Caco-2 (cell line): ENCODE measurements at regions of chr3 and their contacts with region 1.

Region 1: DNA sequence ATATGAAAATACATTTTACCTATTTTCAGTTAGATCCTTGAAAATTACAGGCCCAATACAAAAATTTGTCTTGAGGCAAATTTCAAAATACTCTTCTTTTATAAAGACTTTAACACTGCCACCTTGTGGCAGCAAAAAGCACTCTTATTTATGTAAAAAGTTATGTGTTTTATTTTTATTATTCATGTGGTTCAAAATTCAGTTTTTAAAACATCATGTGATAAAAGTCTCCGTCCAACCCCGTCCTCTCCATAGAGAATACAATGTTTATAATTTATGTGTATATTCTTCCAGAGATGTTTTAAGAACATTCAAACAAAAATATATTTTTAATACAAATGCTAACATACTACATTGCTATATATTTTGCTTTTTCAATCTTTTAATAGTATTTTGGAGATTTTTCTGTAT is 36.9 kb upstream of the TRIM59 start:
- DNase-seq: no peak
- H3K4me3 ChIP-seq: no peak overlapping the region
- H3K4me3 Mint-ChIP-seq: no peak overlapping the region
- H3K27ac Mint-ChIP-seq: no peak overlapping the region
- H3K4me1 ChIP-seq: no peaks in the 10 kb centered on the region
- H3K4me1 Mint-ChIP-seq: no peaks in the 10 kb centered on the region
- H3K27me3 ChIP-seq: no peaks in the 10 kb centered on the region
- H3K27me3 Mint-ChIP-seq: no peaks in the 10 kb centered on the region
- CTCF ChIP-seq: peak; percentile 50 to 62

Region 2: GRCh38 chr3:159988617-159989271 is 497.7 kb before region 1 on chr3 and contains the start of gene IL12A:
- CTCF ChIA-PET with region 1: no interaction called
- POLR2A ChIA-PET with region 1: no interaction called
- intact Hi-C with region 1: loop called (anchors 5 kb)
- DNase-seq: peak; percentile 80 to 86
- H3K4me3 ChIP-seq: peak within 1 kb of the TSS; percentile 55
- H3K4me3 Mint-ChIP-seq: peak within 1 kb of the TSS; percentile 83
- H3K27ac Mint-ChIP-seq: no peak within 1 kb of the TSS
- H3K4me1 ChIP-seq: peaks cover 11% of the 10 kb centered on the region
- H3K4me1 Mint-ChIP-seq: peaks cover 18% of the 10 kb centered on the region
- H3K27me3 ChIP-seq: no peaks in the 10 kb centered on the region
- H3K27me3 Mint-ChIP-seq: no peaks in the 10 kb centered on the region
- CTCF ChIP-seq: peak; percentile 91
- total RNA-seq, gene IL12A: 0.60 and 0.95 TPM in 2 replicates

Region 3: DNA sequence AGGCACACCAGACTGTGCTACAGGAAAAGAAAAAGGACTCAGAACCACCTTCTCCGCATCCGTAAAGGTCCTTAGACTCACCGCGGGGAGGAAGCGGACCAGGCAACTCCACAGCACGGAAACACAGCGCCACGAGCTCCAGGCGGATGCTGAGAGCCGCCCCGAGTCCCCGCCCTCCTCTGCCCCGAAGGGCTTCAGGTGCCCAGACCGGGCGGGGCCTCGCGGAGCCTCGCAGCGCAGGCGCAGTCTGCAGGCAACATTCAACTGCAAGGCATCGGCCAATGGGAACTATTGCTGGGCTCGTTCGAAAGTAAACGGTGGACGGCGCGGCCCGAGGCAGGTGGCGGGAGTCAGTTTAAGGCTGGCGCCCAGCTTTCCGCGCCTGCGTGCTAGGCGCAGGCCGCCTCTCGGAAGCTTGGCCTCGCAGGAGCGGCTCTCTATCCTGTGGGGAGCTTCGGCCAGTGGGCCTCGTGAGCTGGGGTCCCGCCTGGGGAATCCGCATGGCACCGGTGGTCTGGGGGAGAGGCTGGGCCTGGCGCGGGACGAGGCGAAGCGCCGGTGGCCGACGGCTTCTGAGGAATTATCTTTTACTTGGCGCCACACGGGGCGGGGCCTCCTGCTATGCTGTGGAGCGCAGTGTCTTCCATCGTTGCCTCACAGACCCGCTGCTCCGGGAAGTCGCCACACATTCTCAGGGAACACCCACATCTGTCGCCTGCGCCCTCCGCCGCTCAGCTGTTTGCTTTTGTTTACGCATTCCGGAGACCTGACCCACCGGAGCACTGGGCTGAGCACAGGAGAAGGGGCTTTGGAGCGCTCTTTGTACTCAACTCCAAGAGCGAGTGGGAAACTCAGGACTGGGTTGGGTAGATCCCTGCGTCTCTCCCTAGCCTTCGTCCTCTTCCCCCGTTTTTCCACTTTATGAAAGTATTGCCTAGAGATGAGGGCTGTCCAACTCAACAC is 36.5 kb before region 1 on chr3 and contains the start of gene TRIM59:
- CTCF ChIA-PET with region 1: no interaction called
- POLR2A ChIA-PET with region 1: no interaction called
- intact Hi-C with region 1: loop called (anchors 2 kb)
- DNase-seq: peak; percentile 76 to 89
- H3K4me3 ChIP-seq: peak within 1 kb of the TSS; percentile 43
- H3K4me3 Mint-ChIP-seq: peak within 1 kb of the TSS; percentile 94
- H3K27ac Mint-ChIP-seq: peak within 1 kb of the TSS; percentile 93
- H3K4me1 ChIP-seq: 0 out of 2 replicates have a peak, but pooled peaks cover 5% of the 10 kb centered on the region
- H3K4me1 Mint-ChIP-seq: no peaks in the 10 kb centered on the region
- H3K27me3 ChIP-seq: no peaks in the 10 kb centered on the region
- H3K27me3 Mint-ChIP-seq: no peaks in the 10 kb centered on the region
- CTCF ChIP-seq: no peak
- total RNA-seq, gene TRIM59: 3.8 and 4.5 TPM in 2 replicates